BJ (cell line): ENCODE measurements at regions of chr17 and their contacts with region 1.

Region 1: DNA sequence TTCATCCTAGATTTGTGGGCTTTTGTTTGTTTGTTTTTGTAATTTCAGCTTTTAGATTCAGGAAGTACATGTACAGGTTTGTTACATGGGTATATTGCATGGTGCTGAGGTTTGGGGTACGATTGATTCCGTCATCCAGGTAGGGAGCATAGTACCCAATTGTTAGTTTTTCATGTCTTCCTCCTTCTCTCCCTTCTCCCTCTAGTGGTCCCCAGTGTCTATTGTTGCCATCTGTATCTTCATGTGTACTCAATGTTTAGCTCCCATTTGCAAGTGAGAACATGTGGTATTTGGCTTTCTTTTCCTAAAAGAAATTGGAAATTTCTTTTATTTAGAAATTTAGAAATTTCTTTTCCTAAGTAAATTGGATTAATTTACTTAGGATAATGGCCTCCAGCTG is 37.1 kb upstream of the BCAS3 start:
- DNase-seq: no peak
- H3K4me3 ChIP-seq: no peak overlapping the region
- H3K27me3 ChIP-seq: no peaks in the 10 kb centered on the region
- CTCF ChIP-seq: peak; percentile 64

Region 2: DNA sequence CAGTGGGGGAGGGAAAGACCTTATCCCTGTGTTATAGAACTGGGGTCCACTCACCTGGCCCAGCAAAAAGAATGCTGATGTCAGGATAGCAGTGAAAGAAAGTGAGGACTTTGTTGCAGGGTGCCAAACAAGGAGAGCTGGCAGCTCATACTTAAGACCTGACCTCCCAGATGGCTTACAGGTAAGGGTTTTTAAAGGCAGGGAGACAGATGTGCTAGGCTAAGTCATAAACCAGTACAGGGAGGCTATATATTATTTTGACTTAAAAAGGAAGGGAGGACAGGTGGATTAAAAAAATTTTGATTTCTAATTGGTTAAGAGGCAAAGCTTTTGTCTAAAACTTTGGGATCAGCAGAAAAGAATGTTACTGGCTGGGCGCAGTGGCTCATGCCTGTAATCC is 227.3 kb before region 1 on chr17:
- CTCF ChIA-PET with region 1: no interaction called
- POLR2A ChIA-PET with region 1: no interaction called
- DNase-seq: no peak
- H3K4me3 ChIP-seq: no peak overlapping the region
- H3K27me3 ChIP-seq: no peaks in the 10 kb centered on the region
- CTCF ChIP-seq: no peak

Region 3: DNA sequence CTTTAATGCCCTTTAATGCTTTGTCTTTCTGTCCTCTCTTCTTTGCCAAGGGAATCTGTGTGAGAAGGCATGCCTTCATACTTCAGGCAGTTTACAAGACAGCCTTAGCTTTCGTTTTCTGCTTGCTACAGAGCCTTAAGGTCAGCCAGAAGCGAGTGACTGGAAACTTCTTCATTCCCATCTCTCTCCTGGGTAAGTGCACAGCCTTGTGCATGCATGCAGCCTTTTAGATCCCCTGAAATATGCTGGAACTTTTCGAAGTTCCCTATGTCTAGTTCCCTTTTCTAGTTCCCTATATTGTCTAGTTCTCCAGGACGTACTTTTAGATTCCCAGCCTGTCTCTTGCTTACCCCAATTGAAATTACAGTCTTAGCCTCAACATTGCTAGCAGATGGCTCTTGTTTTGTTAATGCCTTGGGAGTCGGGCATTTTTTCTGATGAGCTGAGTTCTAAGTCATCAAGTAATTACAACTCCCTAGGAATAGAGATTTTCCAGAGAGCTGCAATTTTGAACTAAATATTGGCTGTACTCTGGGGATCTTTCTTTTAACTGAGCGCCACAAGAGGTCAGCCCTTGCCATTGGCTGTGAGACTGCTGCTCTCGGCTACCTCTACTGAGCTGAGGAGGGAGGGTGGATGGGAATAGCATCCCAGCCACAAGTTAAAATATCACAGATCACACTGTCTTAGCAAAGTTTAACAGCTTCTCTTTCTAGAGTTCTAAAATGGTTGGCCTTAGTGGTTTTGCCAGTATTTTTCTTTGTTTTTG is 63.2 kb before region 1 on chr17:
- CTCF ChIA-PET with region 1: interaction called, 12 read pairs
- POLR2A ChIA-PET with region 1: no interaction called
- DNase-seq: no peak
- H3K4me3 ChIP-seq: peak overlapping the region; percentile 30
- H3K27me3 ChIP-seq: no peaks in the 10 kb centered on the region
- CTCF ChIP-seq: no peak; the same call in 1 of the 2 replicates

Region 4: DNA sequence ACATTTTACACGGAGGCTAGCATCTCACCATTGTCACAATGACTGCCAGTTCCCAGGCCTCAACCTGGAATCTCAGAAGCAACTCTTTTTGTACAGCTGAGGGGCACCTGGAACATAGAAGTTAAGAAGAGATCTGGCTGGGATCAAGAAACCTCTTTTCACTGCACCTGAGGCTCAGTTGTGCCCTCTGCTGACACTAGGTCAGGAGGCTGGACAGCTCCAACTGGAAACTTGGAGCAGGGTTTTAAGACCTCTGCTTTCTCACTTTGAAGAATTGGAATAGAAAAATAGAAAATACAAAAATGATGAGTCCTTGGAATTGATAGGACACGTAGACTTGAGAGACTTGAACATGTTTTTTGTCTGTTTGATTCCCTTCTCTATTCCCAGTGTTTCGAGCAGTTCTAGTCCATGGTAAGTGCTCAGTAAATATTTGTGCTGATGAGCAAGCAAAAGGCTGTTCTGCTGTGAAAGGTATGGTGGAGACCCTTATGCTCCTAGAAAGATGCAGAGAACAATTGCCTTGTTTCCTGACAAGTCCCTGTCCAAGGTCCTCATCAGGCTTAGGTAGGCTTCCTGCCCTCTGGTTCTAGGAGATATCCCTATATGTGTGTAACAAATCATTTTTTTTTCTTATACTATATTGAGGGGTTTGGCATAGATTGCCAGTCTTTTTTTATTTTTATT is 54.1 kb before region 1 on chr17:
- CTCF ChIA-PET with region 1: interaction called, 11 read pairs
- POLR2A ChIA-PET with region 1: no interaction called
- DNase-seq: no peak
- H3K4me3 ChIP-seq: no peak overlapping the region
- H3K27me3 ChIP-seq: peaks cover 2% of the 10 kb centered on the region; the same call in 1 of the 2 replicates
- CTCF ChIP-seq: peak; percentile 25; the same call in 1 of the 2 replicates

Region 5: DNA sequence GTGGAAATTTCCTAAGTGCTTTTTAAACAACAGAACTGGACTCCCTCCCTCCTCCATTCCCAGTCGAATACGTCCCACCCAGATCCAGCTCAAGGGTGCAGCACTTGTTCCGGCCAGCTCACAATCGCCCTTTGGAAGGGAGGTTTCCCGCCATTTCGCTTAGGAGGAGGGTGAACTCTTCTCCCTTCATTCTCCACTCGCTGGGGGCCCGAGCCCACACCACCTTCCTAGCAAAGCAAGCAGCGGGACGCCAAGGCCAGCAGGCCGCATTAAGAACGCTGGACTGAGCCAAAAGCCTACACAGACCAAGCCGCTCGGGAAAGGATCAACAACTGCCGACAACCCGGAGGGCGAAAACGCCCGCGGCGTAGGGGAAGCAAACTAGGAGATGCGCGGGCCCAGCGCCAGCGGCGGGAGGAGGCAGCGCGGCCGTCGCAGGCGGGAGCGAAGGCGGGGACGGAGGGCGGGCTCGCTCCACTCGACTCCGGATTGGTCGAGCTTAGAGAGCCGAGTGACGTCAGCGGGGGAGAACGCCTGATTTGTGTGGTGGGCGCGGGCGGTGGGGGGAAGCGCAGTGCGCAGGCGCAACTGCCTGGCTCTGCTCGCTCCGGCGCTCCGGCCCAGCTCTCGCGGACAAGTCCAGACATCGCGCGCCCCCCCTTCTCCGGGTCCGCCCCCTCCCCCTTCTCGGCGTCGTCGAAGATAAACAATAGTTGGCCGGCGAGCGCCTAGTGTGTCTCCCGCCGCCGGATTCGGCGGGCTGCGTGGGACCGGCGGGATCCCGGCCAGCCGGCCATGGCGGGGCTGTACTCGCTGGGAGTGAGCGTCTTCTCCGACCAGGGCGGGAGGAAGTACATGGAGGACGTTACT is 40.6 kb before region 1 on chr17 and contains the start of gene PPM1D:
- CTCF ChIA-PET with region 1: interaction called, 12 read pairs
- POLR2A ChIA-PET with region 1: no interaction called
- DNase-seq: peak; percentile 88
- H3K4me3 ChIP-seq: peak within 1 kb of the TSS; percentile 68
- H3K27me3 ChIP-seq: no peaks in the 10 kb centered on the region
- CTCF ChIP-seq: no peak
- polyA plus RNA-seq, gene PPM1D: 4.2 and 7.4 TPM in 2 replicates

Region 6: GRCh38 chr17:60618854-60619412 is 21.6 kb before region 1 on chr17:
- CTCF ChIA-PET with region 1: interaction called, 18 read pairs
- POLR2A ChIA-PET with region 1: no interaction called
- DNase-seq: no peak
- H3K4me3 ChIP-seq: no peak overlapping the region
- H3K27me3 ChIP-seq: no peaks in the 10 kb centered on the region
- CTCF ChIP-seq: no peak

Region 7: GRCh38 chr17:60630352-60630751 is 10.2 kb before region 1 on chr17:
- CTCF ChIA-PET with region 1: interaction called, 12 read pairs
- POLR2A ChIA-PET with region 1: no interaction called
- DNase-seq: no peak
- H3K4me3 ChIP-seq: no peak overlapping the region
- H3K27me3 ChIP-seq: no peaks in the 10 kb centered on the region
- CTCF ChIP-seq: no peak